Ascending aorta (tissue), 2 donors: ENCODE measurements at regions of chr18 and their contacts with region 1.

Region 1: DNA sequence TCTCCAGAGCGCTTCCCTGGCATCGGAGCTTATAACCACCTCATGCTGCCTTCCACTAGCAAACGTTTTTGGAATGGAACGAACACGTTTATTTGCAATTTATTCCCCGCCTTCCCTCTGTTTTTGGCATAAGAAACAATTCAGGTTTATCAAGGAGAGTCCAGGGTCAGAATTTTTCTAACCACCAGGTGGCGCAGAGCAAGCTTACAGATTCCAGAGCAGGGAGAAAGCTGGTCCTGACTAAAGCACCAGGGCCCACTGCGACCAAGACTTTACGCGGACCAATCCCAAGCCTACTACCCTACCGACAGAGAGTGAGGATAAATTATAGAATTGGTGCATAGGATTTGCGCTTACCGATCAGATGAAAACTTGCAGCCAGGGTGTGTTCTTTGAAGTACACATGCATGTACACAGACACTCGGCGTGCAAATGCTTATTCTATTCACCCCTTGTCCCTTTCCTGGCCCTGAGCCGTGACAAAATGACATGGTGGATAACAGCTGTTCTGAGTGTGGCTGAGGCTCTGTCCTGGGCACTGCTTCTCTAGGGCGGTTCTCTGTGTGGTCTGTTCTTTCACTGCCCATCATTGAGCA is 34.7 kb downstream of the NAPG start:
- DNase-seq: peak in 1 of 2 donors; percentile 85
- H3K4me3 ChIP-seq: peak overlapping the region; percentile 34 to 49
- H3K27ac ChIP-seq: no peak overlapping the region
- H3K4me1 ChIP-seq: peaks cover 0 to 2% of the 10 kb centered on the region in 2 donors
- H3K27me3 ChIP-seq: no peaks in the 10 kb centered on the region
- CTCF ChIP-seq: peak; percentile 60 to 78 (median 75)

Region 2: GRCh38 chr18:11149441-11150270 is 589.1 kb after region 1 on chr18 and contains the start of gene PIEZO2:
- intact Hi-C with region 1: loop called (anchors 10 kb)
- DNase-seq: peak in 1 of 2 donors; percentile 82
- H3K4me3 ChIP-seq: peak within 1 kb of the TSS; percentile 57 to 84
- H3K27ac ChIP-seq: no peak within 1 kb of the TSS
- H3K4me1 ChIP-seq: peaks cover 10% of the 10 kb centered on the region in 2 donors
- H3K27me3 ChIP-seq: peaks cover 9% of the 10 kb centered on the region
- CTCF ChIP-seq: no peak
- total RNA-seq, gene PIEZO2: 3.1 TPM

Region 3: DNA sequence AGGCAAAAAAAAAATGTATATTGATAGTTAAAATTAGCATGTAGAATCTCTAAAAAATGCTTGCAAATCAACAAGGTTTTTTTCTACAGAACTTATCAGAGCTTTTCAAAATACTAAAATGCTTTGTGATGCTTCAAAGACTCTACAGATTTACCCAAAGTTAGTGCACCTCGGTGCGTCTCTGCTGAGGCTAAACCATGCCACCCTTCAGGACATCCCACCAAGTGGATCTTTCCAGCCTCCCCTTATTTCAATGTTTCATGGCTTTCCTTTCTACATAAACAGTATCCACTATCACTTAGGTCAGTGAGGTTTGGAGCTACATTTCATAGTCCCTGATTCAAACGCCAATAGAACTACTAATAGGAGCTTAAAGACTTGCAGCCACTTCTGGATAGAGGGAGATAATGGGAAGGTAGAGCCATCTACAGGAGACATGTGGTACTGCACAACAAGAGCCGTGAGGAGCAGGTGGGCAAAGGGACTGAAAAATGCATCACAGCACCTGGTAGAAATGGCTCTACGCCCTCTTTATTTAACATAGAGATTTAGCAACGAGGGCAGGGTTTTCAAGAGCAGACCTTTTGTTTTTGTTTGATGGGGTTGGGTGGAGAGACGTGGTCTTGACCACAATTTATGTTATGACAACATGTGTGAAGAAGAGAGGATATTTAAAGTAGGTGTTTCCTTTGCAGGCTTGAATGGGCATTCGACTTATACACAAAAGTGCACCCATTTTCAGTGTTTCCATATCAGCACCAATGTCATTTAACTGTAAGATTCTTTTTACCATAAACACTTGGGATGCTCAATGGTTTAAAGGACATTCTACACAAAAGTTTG is 992.8 kb after region 1 on chr18:
- intact Hi-C with region 1: loop called (anchors 5 kb)
- DNase-seq: no peak
- H3K4me3 ChIP-seq: no peak overlapping the region
- H3K27ac ChIP-seq: no peak overlapping the region
- H3K4me1 ChIP-seq: no peaks in the 10 kb centered on the region
- H3K27me3 ChIP-seq: no peaks in the 10 kb centered on the region
- CTCF ChIP-seq: peak; percentile 68 to 90 (median 87)